ENCODE measurements at regions of chr16 and their contacts with region 1.

Region 1: DNA sequence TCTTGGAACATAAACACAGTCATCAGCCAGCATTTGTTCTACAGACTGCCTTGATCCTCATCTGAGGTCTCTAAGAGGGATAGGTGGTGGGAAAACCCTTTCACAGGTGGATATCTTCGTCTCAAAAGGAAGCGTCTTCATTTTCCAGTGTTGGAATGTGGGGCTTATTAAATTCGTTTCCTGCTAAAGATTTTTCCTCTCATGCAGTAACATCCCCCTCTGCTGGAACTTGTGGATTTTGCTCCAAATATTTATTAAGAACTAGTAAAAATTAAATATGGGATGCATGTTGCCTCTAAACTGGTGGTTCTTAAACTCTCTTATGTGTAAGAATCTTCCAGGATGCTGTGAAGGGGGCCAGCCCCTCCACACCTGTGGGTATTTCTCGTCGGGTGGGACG is 20.1 kb upstream of the MLYCD start:
- DNase-seq: no peak
- ATAC-seq: no peak
- H3K4me3 ChIP-seq: no peak overlapping the region
- H3K27ac ChIP-seq: no peak overlapping the region
- H3K4me1 ChIP-seq: peaks cover 0 to 9% (median 0%) of the 10 kb centered on the region in 9 donors
- H3K27me3 ChIP-seq: peaks cover 0 to 23% (median 12%) of the 10 kb centered on the region in 7 donors
- CTCF ChIP-seq: peak; percentile 21 to 70 (median 54)

Region 2: DNA sequence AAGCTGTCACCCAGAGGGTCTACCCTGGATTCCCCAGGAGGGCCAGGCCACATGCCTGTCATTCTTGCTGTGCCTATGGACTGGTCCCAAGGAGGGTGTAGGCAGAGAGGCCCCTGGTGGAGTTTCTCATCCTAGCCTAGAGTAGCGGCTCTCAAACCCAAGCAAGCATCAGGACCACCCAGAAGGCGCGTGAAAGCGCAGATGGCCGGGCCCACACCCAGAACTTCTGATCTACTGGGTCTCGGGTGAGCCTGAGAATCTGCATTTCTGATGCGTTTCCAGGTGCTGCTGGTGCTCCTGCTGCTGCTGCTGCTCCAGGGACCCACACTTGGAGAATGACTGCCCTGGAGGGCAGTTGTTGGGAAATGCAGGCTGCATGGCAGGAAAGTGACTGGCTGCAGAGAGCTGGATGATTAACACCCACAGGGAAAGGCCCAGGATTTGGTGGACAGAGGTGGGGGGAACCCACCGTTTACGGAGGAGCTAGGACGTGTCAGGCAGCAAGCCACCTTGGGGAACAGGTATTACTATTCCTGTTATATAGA is 64.8 kb after region 1 on chr16:
- intact Hi-C with region 1: loop called in 1 of 10 experiments (anchors 2 kb)
- DNase-seq: no peak
- ATAC-seq: no peak
- H3K4me3 ChIP-seq: no peak overlapping the region
- H3K27ac ChIP-seq: no peak overlapping the region
- H3K4me1 ChIP-seq: peaks cover 0 to 20% (median 11%) of the 10 kb centered on the region in 9 donors
- H3K27me3 ChIP-seq: no peaks in the 10 kb centered on the region
- CTCF ChIP-seq: no peak

Measured in heart right ventricle (tissue), 16 donors.